Mammary epithelial cell (primary cell): ENCODE measurements at regions of chr12 and their contacts with region 1.

Region 1: DNA sequence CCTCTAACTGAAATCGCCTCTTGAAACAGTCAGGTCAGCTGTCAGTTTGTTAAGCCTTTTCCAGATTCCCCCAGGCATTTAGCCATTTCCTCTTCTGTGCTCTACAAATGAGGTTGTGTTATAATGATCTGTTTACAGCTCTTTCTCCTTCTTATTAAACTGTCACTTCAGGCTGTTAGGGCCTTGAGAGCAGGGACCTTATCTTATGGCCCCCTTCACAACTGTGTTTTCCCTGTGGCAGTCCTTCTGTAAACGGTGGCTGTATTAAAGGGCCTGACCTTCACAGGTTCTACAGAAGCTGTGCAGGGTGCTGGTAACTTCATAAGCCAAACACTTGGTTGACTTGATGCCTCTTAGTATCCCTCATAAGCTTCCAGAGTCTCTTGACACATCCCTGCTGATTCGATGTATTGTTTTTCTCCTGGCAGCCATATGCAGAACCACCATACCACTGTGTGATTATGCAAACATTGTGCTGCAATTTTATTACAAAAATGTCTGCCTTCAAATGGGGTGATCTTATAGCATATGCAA is 104.7 kb downstream of the PLEKHA5 start:
- DNase-seq: peak; percentile 14
- H3K4me3 ChIP-seq: no peak overlapping the region
- H3K27ac ChIP-seq: no peak overlapping the region
- H3K4me1 ChIP-seq: peaks cover 8% of the 10 kb centered on the region
- H3K27me3 ChIP-seq: no peaks in the 10 kb centered on the region
- CTCF ChIP-seq: no peak

Region 2: DNA sequence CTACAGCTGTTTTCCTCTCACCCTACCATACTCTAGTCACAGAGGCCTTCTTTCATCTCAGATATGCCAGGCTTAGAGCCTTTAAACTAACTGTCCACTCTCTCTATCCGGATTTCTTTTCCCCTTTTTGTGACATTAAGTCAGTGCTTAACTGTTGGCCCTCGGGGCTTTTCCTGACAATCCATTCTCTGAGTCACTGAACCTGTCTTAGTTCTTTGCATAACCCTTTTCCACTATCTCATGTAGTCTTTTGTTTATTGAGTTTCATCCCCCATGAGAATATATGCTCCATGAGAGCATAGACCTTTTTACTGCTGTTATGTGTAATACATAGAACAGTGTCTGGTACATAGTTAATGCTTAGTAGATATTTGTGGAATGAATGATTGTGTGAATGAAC is 36.0 kb before region 1 on chr12:
- CTCF ChIA-PET with region 1: no interaction called
- dilution Hi-C with region 1: no loop called
- in situ Hi-C with region 1: no loop called
- intact Hi-C with region 1: loop called (anchors 5 kb)
- DNase-seq: peak; percentile 89
- H3K4me3 ChIP-seq: no peak overlapping the region
- H3K27ac ChIP-seq: peak overlapping the region; percentile 44
- H3K4me1 ChIP-seq: peaks cover 24% of the 10 kb centered on the region
- H3K27me3 ChIP-seq: no peaks in the 10 kb centered on the region
- CTCF ChIP-seq: no peak